Activated CD4-positive, alpha-beta T cell treated with anti-CD3 and anti-CD28 coated beads, Interleukin-2, amount 10 ng/mL, durations not matched to agents 24 days and 14 days (primary cell): ENCODE measurements at regions of chr5 and their contacts with region 1.

Region 1: GRCh38 chr5:54517174-54518092 is at the start of gene SNX18:
- DNase-seq: peak; percentile 98
- H3K4me3 Mint-ChIP-seq: peak within 1 kb of the TSS; percentile 87
- H3K27ac Mint-ChIP-seq: peak within 1 kb of the TSS; percentile 76
- H3K4me1 Mint-ChIP-seq: peaks cover 38% of the 10 kb centered on the region
- H3K27me3 Mint-ChIP-seq: peaks cover 27% of the 10 kb centered on the region
- total RNA-seq, gene SNX18: 12.9 and 13.1 TPM in 2 replicates

Region 2: DNA sequence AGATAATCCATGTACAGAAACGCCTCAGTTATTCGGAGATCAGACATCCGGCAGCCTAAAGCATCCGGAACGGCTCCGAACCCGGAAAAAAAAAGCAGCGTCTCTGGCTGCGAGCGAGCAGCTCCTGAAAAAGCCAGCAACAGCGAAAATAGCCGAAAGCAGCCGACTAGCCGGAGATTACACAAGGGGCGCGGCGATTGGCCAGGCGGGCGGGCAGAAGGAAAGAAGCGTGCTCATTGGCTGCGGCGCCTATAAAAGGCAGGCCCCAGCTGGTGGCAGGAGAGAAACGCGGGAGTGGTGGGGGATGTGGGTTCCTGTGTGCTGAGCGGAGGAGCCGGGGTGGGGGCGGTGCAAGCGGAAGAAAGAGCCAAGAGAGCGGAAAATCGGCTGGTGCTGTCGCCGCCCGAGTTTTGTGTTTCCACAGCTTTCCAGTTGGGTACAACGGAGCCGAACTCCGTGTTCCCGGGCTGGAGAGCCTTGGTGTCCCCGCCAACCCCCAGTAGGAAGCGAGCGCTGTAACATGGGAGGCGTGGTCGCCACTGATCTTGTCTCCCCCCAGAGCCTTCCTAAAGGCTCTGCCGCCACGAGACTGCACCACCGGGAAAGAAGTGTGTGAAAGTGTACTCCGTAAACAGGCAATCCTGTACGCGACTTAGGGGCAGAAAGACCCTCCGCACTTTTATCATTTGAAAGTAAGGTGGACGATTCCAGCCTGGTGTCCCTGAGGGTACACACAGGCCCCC is 206.8 kb before region 1 on chr5 and contains the start of gene ARL15:
- intact Hi-C with region 1: loop called (anchors 5 kb)
- DNase-seq: peak; percentile 99
- H3K4me3 Mint-ChIP-seq: peak within 1 kb of the TSS; percentile 88
- H3K27ac Mint-ChIP-seq: peak within 1 kb of the TSS; percentile 88
- H3K4me1 Mint-ChIP-seq: peaks cover 22% of the 10 kb centered on the region
- H3K27me3 Mint-ChIP-seq: peaks cover 18% of the 10 kb centered on the region
- total RNA-seq, gene ARL15: 4.5 and 7.4 TPM in 2 replicates

Region 3: GRCh38 chr5:54719384-54720283 is 202.2 kb after region 1 on chr5:
- intact Hi-C with region 1: loop called (anchors 2 kb)
- DNase-seq: no peak
- H3K4me3 Mint-ChIP-seq: no peak overlapping the region
- H3K27ac Mint-ChIP-seq: peak overlapping the region; percentile 54
- H3K4me1 Mint-ChIP-seq: peaks cover 25% of the 10 kb centered on the region
- H3K27me3 Mint-ChIP-seq: peaks cover 2% of the 10 kb centered on the region

Region 4: DNA sequence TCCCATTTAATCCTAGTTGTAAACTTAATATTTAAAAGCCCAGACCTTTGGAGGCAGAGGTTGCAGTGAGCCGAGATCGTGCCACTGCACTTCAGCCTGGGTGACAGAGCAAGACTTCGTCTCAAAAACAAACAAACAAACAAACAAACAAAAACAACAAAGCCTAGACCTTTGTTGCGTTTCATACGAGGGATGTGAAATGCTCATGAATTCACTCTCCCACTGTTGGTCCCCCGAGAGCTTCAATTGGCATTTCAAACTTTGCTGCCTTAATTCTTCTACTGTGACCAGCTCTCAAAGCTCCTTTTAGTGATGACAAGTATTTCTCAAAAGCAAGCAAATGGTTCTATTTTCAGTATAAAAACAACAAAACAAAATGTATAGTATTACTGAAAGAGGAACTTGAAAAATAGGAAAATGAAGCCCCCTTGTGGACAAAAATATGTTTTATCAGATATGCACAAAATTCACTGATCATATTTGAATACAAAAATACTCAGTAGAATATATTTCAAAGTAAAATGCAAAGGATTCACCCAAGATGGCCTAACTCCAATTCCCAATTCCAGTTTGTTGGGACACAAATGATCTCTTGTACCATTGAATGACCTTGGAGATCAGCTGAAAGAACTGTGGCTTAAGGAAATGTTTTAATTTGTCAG is 327.6 kb after region 1 on chr5:
- intact Hi-C with region 1: loop called (anchors 1 kb)
- DNase-seq: peak; percentile 68
- H3K4me3 Mint-ChIP-seq: peak overlapping the region; percentile 56
- H3K27ac Mint-ChIP-seq: peak overlapping the region; percentile 18
- H3K4me1 Mint-ChIP-seq: peaks cover 13% of the 10 kb centered on the region
- H3K27me3 Mint-ChIP-seq: peaks cover 22% of the 10 kb centered on the region

Region 5: DNA sequence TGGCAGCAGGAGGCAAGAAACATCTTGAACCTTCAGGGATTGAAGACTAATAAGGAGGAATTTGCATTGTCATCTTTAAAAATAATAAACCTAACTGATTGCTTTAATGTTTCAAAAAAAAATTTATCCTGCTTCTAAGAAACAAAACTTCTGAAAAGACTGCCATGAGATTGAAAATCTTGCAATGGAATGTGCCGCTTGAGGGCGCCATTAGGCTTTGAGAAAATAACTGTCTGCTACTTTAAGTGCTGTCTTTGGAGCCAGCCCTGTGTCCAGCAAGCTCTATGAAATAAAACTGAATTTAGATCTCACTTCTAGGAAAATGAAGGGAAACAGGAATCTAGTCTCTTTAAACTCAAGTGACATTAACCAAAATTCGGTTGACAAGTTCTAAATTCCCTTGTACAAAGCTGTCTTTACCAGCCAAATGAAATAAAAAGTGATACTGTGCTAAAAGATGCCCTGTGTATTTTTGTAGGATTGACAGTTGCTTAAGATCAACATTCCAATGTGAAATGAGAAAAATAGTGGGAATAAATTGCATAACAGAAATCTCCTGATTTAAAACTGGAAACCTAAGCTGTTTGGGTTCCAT is 388.6 kb after region 1 on chr5:
- intact Hi-C with region 1: loop called (anchors 2 kb)
- DNase-seq: peak; percentile 92
- H3K4me3 Mint-ChIP-seq: no peak overlapping the region
- H3K27ac Mint-ChIP-seq: no peak overlapping the region
- H3K4me1 Mint-ChIP-seq: peaks cover 50% of the 10 kb centered on the region
- H3K27me3 Mint-ChIP-seq: peaks cover 40% of the 10 kb centered on the region

Region 6: DNA sequence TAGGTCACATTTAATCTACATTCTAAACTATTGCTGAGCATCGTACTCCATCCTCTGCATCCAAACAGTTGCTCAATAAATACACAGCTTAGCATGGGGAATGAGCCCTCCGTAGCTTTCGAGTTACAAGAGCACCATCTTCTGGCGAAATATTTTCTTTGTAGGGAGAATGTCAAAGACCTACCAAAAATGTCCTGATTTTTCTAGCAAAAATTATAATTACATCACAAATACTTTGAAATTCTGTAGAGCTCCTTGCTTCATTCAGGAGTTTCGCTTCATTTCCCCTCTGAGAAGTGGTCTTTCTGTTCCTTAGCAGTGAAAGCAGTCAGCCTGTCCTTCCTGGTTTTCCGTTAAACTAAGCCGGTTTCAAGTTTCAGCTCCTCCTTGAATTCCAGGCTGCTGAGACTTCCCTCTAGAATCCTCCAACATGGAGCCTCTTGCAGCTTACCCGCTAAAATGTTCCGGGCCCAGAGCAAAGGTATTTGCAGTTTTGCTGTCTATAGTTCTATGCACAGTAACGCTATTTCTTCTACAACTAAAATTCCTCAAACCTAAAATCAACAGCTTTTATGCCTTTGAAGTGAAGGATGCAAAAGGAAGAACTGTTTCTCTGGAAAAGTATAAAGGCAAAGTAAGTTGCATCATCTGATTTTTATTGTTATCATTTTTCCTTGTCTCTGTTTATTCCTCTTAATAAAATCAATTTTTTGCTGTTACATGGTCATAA is 642.5 kb after region 1 on chr5 and contains the start of gene GPX8:
- intact Hi-C with region 1: loop called (anchors 1 kb)
- DNase-seq: peak; percentile 83
- H3K4me3 Mint-ChIP-seq: no peak within 1 kb of the TSS
- H3K27ac Mint-ChIP-seq: no peak within 1 kb of the TSS
- H3K4me1 Mint-ChIP-seq: no peaks in the 10 kb centered on the region
- H3K27me3 Mint-ChIP-seq: peaks cover 60% of the 10 kb centered on the region
- total RNA-seq, gene GPX8: not detected in 2 replicates